ENCODE measurements at regions of chr15 and their contacts with region 1.

Region 1: GRCh38 chr15:59528965-59529402 is 82.6 kb upstream of the GCNT3 start:
- DNase-seq: peak; percentile 63 to 80 (median 71)
- ATAC-seq: peak; percentile 94
- H3K4me3 ChIP-seq: no peak overlapping the region
- H3K27ac ChIP-seq: no peak overlapping the region
- H3K4me1 ChIP-seq: no peaks in the 10 kb centered on the region
- H3K27me3 ChIP-seq: peaks cover 9 to 18% of the 10 kb centered on the region in 2 experiments; a peak in 4 of 5 replicates
- CTCF ChIP-seq: peak; percentile 77 to 88 (median 86)
- EP300 ChIP-seq: no peak
- POLR2A ChIP-seq: no peak
- RAD21 ChIP-seq: peak; percentile 79 to 86

Region 2: DNA sequence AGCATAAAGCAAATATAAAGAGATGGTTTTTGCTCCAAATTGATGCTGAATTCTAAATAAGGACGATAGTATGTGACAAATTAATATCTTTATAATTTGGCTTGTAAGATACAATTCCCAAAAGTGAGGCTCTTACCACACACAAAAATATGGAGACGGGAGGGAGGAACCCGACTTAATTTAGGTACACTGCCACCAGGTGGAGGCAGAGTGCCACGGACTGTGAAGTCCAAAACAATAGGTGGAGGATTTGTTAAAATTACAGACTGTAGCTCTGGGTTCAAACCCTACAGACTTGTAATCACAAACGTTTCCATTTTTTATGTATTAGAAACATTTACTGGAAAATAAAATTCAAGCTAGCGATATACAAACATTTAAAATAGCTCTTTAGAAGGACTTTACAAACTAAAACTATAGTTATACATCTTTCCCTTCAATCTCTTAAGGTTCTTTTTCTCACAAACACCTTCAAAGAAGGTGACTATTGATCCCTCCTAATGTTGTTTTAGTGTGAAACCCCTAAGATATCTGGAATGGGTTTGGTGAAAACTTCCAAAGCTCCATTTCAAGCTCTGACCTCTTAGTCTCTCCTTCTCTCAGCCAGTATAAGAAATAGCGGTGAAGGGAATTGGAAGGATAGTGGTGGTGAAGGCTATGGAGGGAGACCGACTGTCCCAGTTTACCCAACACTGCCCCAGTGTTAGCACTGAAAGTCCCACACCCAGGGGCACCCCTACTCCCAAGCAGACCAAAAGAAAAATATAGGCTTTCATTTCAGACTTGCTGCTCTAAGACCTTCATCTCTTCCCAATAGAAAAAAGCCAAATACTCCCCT is 1301.1 kb before region 1 on chr15:
- CTCF ChIA-PET with region 1: interaction called, 16 read pairs
- POLR2A ChIA-PET with region 1: no interaction called
- in situ Hi-C with region 1: no loop called
- intact Hi-C with region 1: no loop called
- DNase-seq: peak; percentile 66 to 89 (median 74)
- ATAC-seq: peak; percentile 89
- H3K4me3 ChIP-seq: no peak overlapping the region
- H3K27ac ChIP-seq: no peak overlapping the region
- H3K4me1 ChIP-seq: peaks cover 0 to 5% of the 10 kb centered on the region in 2 experiments; a peak in 3 of 5 replicates
- H3K27me3 ChIP-seq: no peaks in the 10 kb centered on the region
- CTCF ChIP-seq: peak; percentile 80 to 92 (median 83)
- EP300 ChIP-seq: no peak
- POLR2A ChIP-seq: no peak
- RAD21 ChIP-seq: peak; percentile 96 to 98

Region 3: DNA sequence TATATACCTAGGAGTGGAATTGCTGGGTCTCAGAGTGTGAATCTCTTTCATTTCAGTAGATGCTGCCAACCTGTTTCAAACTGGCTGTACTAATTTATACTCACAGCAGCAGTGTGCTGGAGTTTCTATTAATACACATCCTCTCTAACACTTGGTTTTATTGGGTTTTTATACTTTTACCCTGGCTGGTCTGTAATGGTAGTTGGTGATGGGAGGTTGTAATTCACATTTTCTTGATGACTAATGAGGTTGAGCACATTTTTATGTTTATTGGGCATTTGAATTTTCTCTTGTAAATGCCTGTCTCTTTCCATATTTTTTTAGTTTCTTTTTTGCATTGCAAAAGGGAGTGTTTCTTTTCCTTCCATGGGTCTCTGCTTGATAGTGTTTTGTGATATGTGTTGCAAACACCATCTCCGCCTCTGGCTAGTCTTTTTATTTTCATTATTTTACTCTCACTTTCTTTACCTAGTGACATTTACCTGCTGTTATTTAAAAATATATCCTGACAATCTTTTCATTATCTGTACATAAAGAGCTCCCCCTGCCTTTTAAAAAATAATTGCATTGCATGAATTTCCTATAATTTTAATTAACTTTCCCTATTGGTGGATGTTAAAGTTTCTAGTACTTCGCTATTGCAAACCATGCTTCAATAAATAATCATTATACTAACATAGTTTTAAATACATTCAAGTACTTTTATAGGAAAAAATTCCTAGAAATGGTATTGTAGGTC is 33.6 kb after region 1 on chr15:
- CTCF ChIA-PET with region 1: interaction called, 11 read pairs
- POLR2A ChIA-PET with region 1: no interaction called
- in situ Hi-C with region 1: no loop called
- intact Hi-C with region 1: loop called (anchors 2 kb)
- DNase-seq: no peak
- ATAC-seq: no peak
- H3K4me3 ChIP-seq: no peak overlapping the region
- H3K27ac ChIP-seq: no peak overlapping the region
- H3K4me1 ChIP-seq: no peaks in the 10 kb centered on the region
- H3K27me3 ChIP-seq: no peaks in the 10 kb centered on the region
- CTCF ChIP-seq: peak in 1 of 3 experiments; percentile 48; a peak in 3 of 6 replicates
- EP300 ChIP-seq: no peak
- POLR2A ChIP-seq: no peak
- RAD21 ChIP-seq: peak in 1 of 2 experiments; percentile 42; a peak in 2 of 4 replicates

Region 4: GRCh38 chr15:59632714-59633113 is 103.7 kb after region 1 on chr15:
- CTCF ChIA-PET with region 1: no interaction called
- POLR2A ChIA-PET with region 1: no interaction called
- in situ Hi-C with region 1: no loop called
- intact Hi-C with region 1: loop called (anchors 2 kb)
- DNase-seq: peak in 2 of 4 experiments; percentile 27 to 30
- ATAC-seq: peak; percentile 90
- H3K4me3 ChIP-seq: no peak overlapping the region
- H3K27ac ChIP-seq: no peak overlapping the region
- H3K4me1 ChIP-seq: no peaks in the 10 kb centered on the region; a peak in 1 of 5 replicates
- H3K27me3 ChIP-seq: no peaks in the 10 kb centered on the region; a peak in 2 of 5 replicates
- CTCF ChIP-seq: peak; percentile 51 to 57 (median 55); a peak in 5 of 6 replicates
- EP300 ChIP-seq: no peak
- POLR2A ChIP-seq: no peak
- RAD21 ChIP-seq: peak in 1 of 2 experiments; percentile 62; a peak in 2 of 4 replicates

Region 5: DNA sequence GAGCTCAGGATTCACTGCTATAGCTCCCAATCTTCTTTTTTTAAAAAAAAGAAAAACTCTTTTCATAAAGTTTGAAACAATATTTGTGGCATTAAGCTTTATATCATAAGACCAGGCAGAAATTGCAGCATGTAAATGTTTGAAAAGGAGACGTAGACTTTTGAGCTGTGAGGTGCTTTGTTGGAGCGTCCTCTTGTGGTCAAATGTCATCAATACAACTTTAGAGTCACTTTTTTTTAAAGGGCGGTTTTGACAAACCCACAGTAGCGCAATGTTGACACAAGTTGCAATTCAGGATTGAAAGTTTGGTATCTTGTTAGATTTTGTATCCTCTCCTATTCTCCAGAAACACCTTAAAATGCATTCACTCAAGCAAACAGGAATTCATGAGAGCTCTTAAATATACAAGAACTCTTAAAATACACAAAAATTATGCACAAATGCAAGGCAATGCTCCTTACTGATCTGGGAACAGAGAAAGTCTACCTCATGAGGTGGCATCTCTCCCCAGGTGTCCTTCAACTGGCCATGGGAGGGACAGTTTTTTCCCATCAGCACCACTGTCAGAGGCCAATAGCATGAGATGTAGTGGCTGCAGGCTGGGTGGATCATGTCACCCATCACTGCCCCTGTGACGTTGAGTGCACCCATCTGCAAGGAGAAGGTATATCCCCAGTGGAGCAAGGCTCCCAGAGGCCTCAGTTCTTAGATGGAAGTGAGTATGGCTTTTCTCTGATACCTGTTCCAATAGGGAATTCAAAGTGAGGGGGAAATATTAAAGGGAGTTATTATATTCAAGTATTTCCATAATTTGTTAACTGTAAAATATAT is 798.1 kb after region 1 on chr15:
- CTCF ChIA-PET with region 1: interaction called, 3 read pairs
- POLR2A ChIA-PET with region 1: no interaction called
- in situ Hi-C with region 1: no loop called
- intact Hi-C with region 1: loop called (anchors 5 kb)
- DNase-seq: peak; percentile 31 to 68 (median 48)
- ATAC-seq: peak; percentile 69
- H3K4me3 ChIP-seq: no peak overlapping the region
- H3K27ac ChIP-seq: no peak overlapping the region
- H3K4me1 ChIP-seq: no peaks in the 10 kb centered on the region
- H3K27me3 ChIP-seq: peaks cover 0 to 10% of the 10 kb centered on the region in 2 experiments; a peak in 3 of 5 replicates
- CTCF ChIP-seq: peak; percentile 69 to 92 (median 75)
- EP300 ChIP-seq: no peak
- POLR2A ChIP-seq: no peak
- RAD21 ChIP-seq: peak; percentile 91 to 95